ENCODE measurements at regions of chr7 and their contacts with region 1.

Region 1: DNA sequence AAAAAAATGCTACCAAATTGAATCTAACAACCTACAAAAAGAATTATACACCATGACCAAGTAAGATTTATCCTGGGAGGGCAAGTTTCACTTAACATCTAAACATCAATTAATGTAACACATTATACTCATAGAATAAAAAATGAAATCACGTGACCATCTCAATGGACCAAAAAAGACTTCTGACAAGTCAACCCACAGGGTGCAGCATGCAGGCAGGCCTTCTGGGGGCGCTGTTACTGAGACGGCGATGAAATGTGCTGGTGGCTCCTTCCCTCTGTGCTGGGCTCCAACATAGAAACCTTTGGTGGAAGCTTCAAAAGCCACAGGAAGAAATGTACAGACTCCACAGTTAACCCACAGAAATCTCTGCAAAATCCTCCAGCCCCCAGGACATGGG is 103.1 kb downstream of the INHBA start:
- DNase-seq: peak; percentile 58 to 92
- H3K4me3 ChIP-seq: no peak overlapping the region
- H3K27ac ChIP-seq: no peak overlapping the region
- H3K4me1 ChIP-seq: peaks cover 0 to 3% (median 0%) of the 10 kb centered on the region in 4 experiments; a peak in 1 of 7 replicates
- H3K27me3 ChIP-seq: no peaks in the 10 kb centered on the region
- CTCF ChIP-seq: peak; percentile 79 to 95 (median 92)
- EP300 ChIP-seq: no peak
- POLR2A ChIP-seq: no peak
- RAD21 ChIP-seq: peak; percentile 56 to 75

Region 2: DNA sequence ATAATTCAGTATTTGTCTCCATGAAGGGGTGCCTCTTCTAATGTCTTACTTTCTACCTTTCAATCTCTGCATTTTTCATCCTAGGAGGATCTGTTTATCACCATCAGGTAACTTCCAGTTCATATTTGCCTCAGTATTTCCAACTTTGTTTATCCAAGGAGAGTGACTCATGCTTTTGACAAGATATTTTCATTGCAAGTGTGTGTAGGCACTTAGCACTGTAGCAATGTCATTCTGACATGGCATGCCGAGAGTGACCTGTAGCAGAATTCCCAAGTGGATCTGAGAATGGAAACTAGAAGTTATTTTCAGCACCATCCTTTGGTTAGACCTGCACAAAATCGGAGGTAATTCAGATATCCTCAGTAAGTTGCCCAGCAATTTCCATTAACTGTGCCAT is 26.7 kb before region 1 on chr7:
- CTCF ChIA-PET with region 1: no interaction called
- POLR2A ChIA-PET with region 1: no interaction called
- DNase-seq: no peak
- H3K4me3 ChIP-seq: no peak overlapping the region
- H3K27ac ChIP-seq: no peak overlapping the region
- H3K4me1 ChIP-seq: peaks cover 0 to 7% (median 6%) of the 10 kb centered on the region in 4 experiments; a peak in 3 of 7 replicates
- H3K27me3 ChIP-seq: no peaks in the 10 kb centered on the region
- CTCF ChIP-seq: no peak
- EP300 ChIP-seq: no peak
- POLR2A ChIP-seq: no peak
- RAD21 ChIP-seq: no peak

Region 3: GRCh38 chr7:41584746-41585145 is 15.0 kb before region 1 on chr7:
- CTCF ChIA-PET with region 1: interaction called, 33 read pairs
- POLR2A ChIA-PET with region 1: no interaction called
- DNase-seq: no peak
- H3K4me3 ChIP-seq: no peak overlapping the region
- H3K27ac ChIP-seq: no peak overlapping the region
- H3K4me1 ChIP-seq: no peaks in the 10 kb centered on the region; a peak in 1 of 7 replicates
- H3K27me3 ChIP-seq: no peaks in the 10 kb centered on the region
- CTCF ChIP-seq: no peak
- EP300 ChIP-seq: no peak
- POLR2A ChIP-seq: no peak
- RAD21 ChIP-seq: no peak